Dendritic cell treated with granulocyte-macrophage colony-stimulating factor and Interleukin-4, amounts not matched to agents 40 ng/mL and 50 ng/mL, for 4 days (primary cell): ENCODE measurements at regions of chr17 and their contacts with region 1.

Region 1: DNA sequence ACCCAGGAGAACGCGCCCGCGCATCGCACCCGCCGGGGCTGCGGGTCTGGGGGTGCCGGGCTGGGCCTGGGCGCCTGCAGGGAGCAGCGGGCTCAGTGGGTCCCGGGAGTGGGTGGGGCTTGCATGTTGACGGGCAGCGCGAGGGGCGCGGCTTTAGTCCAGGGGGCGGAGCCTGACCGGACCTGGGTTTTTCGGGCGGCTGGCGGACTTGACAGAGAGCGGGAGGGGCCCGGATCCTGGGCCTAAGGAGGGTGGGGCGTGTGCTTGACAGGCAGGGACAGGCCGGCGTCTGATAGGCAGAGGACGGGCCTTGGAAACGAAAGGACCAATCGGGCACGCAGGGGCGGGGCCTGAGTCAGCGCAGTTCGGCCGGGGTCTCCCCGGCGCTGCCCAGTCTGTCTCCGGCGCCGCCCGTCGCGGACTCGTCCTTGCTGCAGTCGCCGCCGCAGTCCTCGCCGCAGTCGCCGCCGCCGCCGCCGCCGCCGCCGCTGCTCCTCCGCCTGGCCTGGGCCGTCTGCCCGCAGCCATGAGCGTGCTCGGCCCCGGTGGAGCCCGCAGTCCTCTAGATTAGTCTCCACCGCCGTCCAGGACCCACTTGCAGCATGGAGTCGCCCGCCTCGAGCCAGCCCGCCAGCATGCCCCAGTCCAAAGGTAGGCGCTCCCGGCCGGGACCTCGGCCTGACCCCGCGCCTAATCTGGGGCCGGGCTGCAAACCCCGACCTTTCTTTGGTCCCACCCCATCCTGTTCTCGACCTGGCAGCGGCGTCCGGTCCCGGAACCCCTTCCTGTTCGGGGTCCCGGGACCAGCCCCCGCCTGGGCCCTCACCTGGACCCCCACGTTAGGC is at the start of gene MAP2K3:
- H3K4me3 Mint-ChIP-seq: peak within 1 kb of the TSS; percentile 91
- H3K27ac Mint-ChIP-seq: peak within 1 kb of the TSS; percentile 98
- H3K4me1 Mint-ChIP-seq: peaks cover 83% of the 10 kb centered on the region
- H3K27me3 Mint-ChIP-seq: peaks cover 2% of the 10 kb centered on the region

Region 2: GRCh38 chr17:21126645-21127510 is 157.7 kb before region 1 on chr17 and contains the start of gene DHRS7B:
- intact Hi-C with region 1: loop called (anchors 2 kb)
- H3K4me3 Mint-ChIP-seq: peak within 1 kb of the TSS; percentile 85
- H3K27ac Mint-ChIP-seq: peak within 1 kb of the TSS; percentile 98
- H3K4me1 Mint-ChIP-seq: peaks cover 48% of the 10 kb centered on the region
- H3K27me3 Mint-ChIP-seq: no peaks in the 10 kb centered on the region

Region 3: GRCh38 chr17:21214015-21214776 is 70.3 kb before region 1 on chr17 and contains the start of gene TMEM11:
- intact Hi-C with region 1: loop called (anchors 5 kb)
- H3K4me3 Mint-ChIP-seq: peak within 1 kb of the TSS; percentile 87
- H3K27ac Mint-ChIP-seq: peak within 1 kb of the TSS; percentile 93
- H3K4me1 Mint-ChIP-seq: peaks cover 67% of the 10 kb centered on the region
- H3K27me3 Mint-ChIP-seq: no peaks in the 10 kb centered on the region

Region 4: GRCh38 chr17:21263351-21263750 is 21.2 kb before region 1 on chr17:
- intact Hi-C with region 1: no loop called
- H3K4me3 Mint-ChIP-seq: no peak overlapping the region
- H3K27ac Mint-ChIP-seq: no peak overlapping the region
- H3K4me1 Mint-ChIP-seq: no peaks in the 10 kb centered on the region
- H3K27me3 Mint-ChIP-seq: no peaks in the 10 kb centered on the region

Region 5: GRCh38 chr17:21318439-21318838 is 33.9 kb after region 1 on chr17:
- intact Hi-C with region 1: loop called (anchors 5 kb)
- H3K4me3 Mint-ChIP-seq: no peak overlapping the region
- H3K27ac Mint-ChIP-seq: no peak overlapping the region
- H3K4me1 Mint-ChIP-seq: peaks cover 16% of the 10 kb centered on the region
- H3K27me3 Mint-ChIP-seq: peaks cover 9% of the 10 kb centered on the region

Region 6: GRCh38 chr17:21358707-21359482 is 74.4 kb after region 1 on chr17:
- intact Hi-C with region 1: no loop called
- H3K4me3 Mint-ChIP-seq: no peak overlapping the region
- H3K27ac Mint-ChIP-seq: no peak overlapping the region
- H3K4me1 Mint-ChIP-seq: no peaks in the 10 kb centered on the region
- H3K27me3 Mint-ChIP-seq: peaks cover 6% of the 10 kb centered on the region

Region 7: DNA sequence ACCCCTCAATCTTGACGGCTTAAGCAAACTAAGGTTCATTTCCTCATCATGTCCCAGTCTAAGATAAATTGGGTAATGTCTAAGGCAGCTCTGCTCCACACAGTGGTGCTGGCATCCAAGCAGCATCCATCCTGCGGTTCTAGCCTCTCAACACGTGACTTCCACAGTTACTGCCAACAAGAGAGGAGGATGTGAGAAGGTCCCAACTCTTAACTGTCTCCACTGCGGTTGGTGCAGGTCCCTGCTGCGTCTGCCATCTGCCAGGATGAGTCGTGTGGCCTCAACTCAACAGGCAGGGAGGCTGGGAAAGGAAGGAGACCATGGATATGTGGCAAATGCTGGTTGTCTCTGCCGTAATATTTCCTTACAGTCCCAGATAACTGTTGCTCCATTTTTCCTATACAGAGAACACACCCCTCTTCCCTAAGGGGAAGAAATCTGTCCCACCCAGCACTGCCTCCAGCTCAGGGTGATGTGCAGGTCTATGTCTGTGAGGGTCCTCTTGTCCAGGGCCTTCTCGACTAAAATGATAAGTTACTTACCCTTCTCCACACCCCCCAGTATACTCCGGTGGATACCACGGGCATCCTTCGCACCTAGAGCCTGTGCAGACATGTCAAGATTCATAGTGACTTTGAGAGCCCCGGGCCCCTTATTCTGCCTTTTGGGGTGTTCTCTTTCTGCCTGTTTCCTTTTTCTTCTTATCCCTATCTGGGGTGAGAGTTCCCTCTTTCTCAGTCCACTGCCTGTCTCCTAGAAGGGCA is 472.5 kb after region 1 on chr17:
- intact Hi-C with region 1: no loop called
- H3K4me3 Mint-ChIP-seq: no peak overlapping the region
- H3K27ac Mint-ChIP-seq: no peak overlapping the region
- H3K4me1 Mint-ChIP-seq: no peaks in the 10 kb centered on the region
- H3K27me3 Mint-ChIP-seq: no peaks in the 10 kb centered on the region